T-cell (primary cell): ENCODE measurements at regions of chr9 and their contacts with region 1.

Region 1: GRCh38 chr9:111842313-111842712 is 47.6 kb upstream of the SHOC1 start:
- DNase-seq: no peak
- ATAC-seq: no peak
- H3K4me3 ChIP-seq: no peak overlapping the region
- H3K4me3 Mint-ChIP-seq: no peak overlapping the region
- H3K27ac ChIP-seq: no peak overlapping the region
- H3K27ac Mint-ChIP-seq: no peak overlapping the region
- H3K4me1 ChIP-seq: no peaks in the 10 kb centered on the region
- H3K4me1 Mint-ChIP-seq: peaks cover 0 to 3% (median 0%) of the 10 kb centered on the region in 3 donors
- H3K27me3 ChIP-seq: peaks cover 0 to 13% of the 10 kb centered on the region in 2 experiments
- H3K27me3 Mint-ChIP-seq: peaks cover 7 to 9% of the 10 kb centered on the region in 2 donors

Region 2: DNA sequence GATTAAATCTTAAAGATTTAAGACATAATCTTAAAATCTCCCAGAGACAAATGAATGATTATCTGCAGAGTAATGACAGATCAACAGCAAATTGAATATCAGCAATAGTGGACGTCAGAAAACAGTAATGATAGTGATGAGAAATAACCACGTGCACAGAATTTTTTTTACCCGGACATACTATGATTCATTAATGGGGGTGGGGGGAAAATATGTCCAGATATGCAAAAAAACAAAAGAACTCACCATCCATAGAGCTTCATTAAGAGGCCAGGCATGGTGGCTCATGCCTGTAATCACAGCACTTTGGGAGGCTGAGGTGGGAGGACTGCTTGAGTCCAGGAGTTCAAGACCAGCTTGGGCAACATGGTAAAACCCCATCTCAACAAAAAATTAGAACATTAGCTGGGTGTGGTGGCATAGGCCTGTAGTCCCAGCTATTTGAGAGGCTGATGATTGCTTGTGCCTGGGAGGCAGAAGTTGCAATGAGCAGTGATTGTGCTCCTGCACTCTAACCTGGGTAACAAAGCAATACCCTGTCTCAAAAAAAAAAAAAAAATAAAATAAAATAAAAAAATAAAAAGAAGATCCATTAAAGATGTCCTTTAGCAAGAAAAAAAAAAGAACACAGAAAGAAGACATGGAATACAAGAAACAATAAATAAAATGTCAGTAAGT is 16.7 kb before region 1 on chr9:
- CTCF ChIA-PET with region 1: interaction called in 1 of 2 experiments, 12 read pairs
- POLR2A ChIA-PET with region 1: interaction called in 1 of 2 experiments, 7 read pairs
- DNase-seq: no peak
- ATAC-seq: no peak
- H3K4me3 ChIP-seq: no peak overlapping the region
- H3K4me3 Mint-ChIP-seq: no peak overlapping the region
- H3K27ac ChIP-seq: no peak overlapping the region
- H3K27ac Mint-ChIP-seq: no peak overlapping the region
- H3K4me1 ChIP-seq: no peaks in the 10 kb centered on the region
- H3K4me1 Mint-ChIP-seq: no peaks in the 10 kb centered on the region
- H3K27me3 ChIP-seq: no peaks in the 10 kb centered on the region
- H3K27me3 Mint-ChIP-seq: no peaks in the 10 kb centered on the region

Region 3: GRCh38 chr9:112615584-112616266 is 773.4 kb after region 1 on chr9:
- CTCF ChIA-PET with region 1: no interaction called
- POLR2A ChIA-PET with region 1: no interaction called
- DNase-seq: no peak
- ATAC-seq: no peak
- H3K4me3 ChIP-seq: no peak overlapping the region
- H3K4me3 Mint-ChIP-seq: no peak overlapping the region
- H3K27ac ChIP-seq: no peak overlapping the region
- H3K27ac Mint-ChIP-seq: no peak overlapping the region
- H3K4me1 ChIP-seq: no peaks in the 10 kb centered on the region
- H3K4me1 Mint-ChIP-seq: peaks cover 3 to 5% (median 5%) of the 10 kb centered on the region in 3 donors
- H3K27me3 ChIP-seq: no peaks in the 10 kb centered on the region
- H3K27me3 Mint-ChIP-seq: no peaks in the 10 kb centered on the region